ENCODE measurements at regions of chr18 and their contacts with region 1.

Region 1: GRCh38 chr18:77000527-77000926 is 132.1 kb downstream of the MBP start:
- DNase-seq: peak; percentile 60
- H3K4me3 Mint-ChIP-seq: no peak overlapping the region
- H3K27ac Mint-ChIP-seq: no peak overlapping the region
- H3K4me1 Mint-ChIP-seq: peaks cover 20% of the 10 kb centered on the region
- H3K27me3 Mint-ChIP-seq: no peaks in the 10 kb centered on the region

Region 2: DNA sequence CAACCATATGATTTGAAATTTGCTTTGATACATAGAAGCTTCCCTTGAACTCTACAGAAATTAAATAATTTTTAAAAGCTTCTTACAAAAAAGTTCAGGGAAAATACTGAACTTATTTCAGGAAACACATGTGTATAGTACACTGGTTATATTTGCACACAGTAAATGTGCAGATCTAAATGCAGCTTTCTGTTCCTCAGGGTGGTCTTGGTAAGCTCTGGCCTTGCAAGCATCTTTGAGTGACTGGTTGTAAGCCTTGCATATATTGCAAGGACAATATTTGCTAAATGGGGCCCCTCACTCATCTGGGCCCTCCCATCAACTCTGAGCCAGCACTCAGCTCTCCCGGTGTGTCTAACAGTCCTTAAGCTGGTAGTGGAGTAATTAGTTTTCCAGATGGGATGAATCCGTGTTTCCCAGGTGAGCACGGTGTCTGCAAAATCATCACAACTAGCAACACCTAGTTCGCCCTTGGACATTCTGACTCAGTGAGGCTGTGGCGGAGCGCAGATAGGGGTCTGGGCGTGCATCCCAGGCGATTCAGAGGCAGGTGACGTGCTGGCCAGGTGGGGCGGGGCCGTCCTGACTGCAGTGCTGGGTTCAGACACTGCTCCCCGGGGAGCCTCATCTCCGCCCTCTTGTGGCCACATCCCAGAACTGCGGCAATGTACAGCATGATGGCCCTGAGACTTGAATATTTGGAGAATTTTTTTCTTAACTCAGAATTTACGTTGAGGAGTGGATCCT is 17.5 kb before region 1 on chr18:
- CTCF ChIA-PET with region 1: interaction called, 24 read pairs
- intact Hi-C with region 1: no loop called
- DNase-seq: peak; percentile 96
- H3K4me3 Mint-ChIP-seq: no peak overlapping the region
- H3K27ac Mint-ChIP-seq: no peak overlapping the region
- H3K4me1 Mint-ChIP-seq: peaks cover 5% of the 10 kb centered on the region
- H3K27me3 Mint-ChIP-seq: no peaks in the 10 kb centered on the region

Region 3: DNA sequence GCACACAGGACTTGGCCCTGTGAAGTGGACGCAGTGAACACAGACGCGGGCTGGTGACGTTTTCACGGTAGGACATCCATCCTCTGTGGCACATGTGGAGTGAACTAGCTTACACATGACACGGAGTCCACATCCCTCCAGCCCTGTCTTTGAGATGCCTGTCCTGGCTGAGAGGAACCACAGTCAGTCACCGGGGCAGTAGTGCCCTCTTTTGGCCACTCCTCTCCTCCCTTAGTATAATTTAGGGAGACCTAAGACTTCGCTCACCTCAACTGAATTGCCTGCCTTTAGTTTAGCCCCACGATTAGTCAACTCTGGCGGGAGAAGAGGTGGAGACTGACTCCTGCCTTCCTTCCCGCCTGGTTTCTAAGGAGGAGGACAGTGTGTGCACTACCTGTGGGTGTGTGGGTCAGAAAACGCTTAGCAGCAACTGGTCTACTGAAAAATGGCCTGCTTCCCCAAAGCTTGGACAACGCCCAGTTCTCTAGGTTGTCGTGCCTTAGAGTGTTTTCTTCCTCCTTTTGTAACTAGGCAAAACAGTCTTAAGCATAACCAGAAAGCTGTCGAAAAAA is 61.5 kb after region 1 on chr18:
- CTCF ChIA-PET with region 1: interaction called, 18 read pairs
- intact Hi-C with region 1: loop called (anchors 1 kb)
- DNase-seq: peak; percentile 55
- H3K4me3 Mint-ChIP-seq: peak overlapping the region; percentile 11
- H3K27ac Mint-ChIP-seq: peak overlapping the region; percentile 98
- H3K4me1 Mint-ChIP-seq: peaks cover 78% of the 10 kb centered on the region
- H3K27me3 Mint-ChIP-seq: no peaks in the 10 kb centered on the region

Region 4: DNA sequence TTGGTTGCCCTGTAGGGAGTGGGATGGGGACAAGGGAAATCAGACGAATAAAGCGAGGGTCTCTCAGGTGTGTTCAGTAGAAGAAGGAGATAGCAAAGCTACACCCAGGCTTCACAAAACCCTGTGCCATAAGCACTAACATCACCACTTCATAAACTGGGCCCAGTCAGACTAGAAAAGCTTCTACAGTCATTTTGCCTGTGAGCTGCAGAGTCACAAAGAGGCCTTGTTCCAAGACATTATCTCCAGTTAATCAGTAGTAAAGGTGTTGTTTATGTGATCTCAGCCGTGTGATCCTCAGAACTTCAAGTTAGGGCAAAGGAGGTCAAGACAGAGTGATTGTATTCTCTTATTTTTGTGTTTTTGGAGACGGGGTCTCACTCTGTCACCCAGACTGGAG is 397.1 kb after region 1 on chr18:
- CTCF ChIA-PET with region 1: no interaction called
- intact Hi-C with region 1: loop called (anchors 5 kb)
- DNase-seq: no peak
- H3K4me3 Mint-ChIP-seq: no peak overlapping the region
- H3K27ac Mint-ChIP-seq: no peak overlapping the region
- H3K4me1 Mint-ChIP-seq: no peaks in the 10 kb centered on the region
- H3K27me3 Mint-ChIP-seq: peaks cover 6% of the 10 kb centered on the region

Region 5: DNA sequence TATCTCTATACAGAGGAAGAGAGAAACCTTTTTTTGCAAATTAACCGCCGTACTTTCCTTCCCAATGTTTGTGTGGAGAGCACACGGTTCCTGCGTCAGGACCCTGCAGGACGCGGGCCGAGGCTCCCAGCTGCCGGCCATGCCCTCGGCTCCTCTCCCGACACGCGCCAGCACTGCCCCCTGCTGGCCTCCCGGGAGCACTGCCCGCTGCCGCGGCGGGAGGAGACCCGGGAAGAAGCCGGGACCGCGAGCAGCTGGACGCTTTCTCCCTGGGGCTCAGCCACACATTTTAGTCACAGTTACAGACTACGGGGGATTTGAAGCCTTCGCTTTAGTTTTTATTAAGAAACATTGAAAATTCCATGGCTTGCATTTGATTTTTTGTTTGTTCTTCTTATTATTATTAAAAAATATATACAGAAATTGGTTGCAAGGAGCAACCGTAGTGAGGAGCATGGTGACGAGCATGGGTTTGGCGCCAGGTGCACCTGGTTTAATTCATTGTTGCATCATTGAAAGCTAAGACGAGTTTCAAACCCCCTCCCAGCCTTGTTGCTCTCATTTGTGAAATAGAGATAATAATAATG is 650.4 kb after region 1 on chr18:
- CTCF ChIA-PET with region 1: no interaction called
- intact Hi-C with region 1: loop called (anchors 1 kb)
- DNase-seq: peak; percentile 70
- H3K4me3 Mint-ChIP-seq: no peak overlapping the region
- H3K27ac Mint-ChIP-seq: no peak overlapping the region
- H3K4me1 Mint-ChIP-seq: no peaks in the 10 kb centered on the region
- H3K27me3 Mint-ChIP-seq: peaks cover 18% of the 10 kb centered on the region

Measured in activated naive CD4-positive, alpha-beta T cell treated with anti-CD3 and anti-CD28 coated beads for 36 hours (primary cell).